Activated T-helper 2 cell treated with anti-CD3 and anti-CD28 coated beads, Interferon-gamma antibody, Interleukin-2, Interleukin-4, amounts not matched to agents 10 μg/mL and 5 μg/mL and 100 μg/mL, durations not matched to agents 14 hours and 24 hours and 36 hours (primary cell): ENCODE measurements at regions of chr17 and their contacts with region 1.

Region 1: DNA sequence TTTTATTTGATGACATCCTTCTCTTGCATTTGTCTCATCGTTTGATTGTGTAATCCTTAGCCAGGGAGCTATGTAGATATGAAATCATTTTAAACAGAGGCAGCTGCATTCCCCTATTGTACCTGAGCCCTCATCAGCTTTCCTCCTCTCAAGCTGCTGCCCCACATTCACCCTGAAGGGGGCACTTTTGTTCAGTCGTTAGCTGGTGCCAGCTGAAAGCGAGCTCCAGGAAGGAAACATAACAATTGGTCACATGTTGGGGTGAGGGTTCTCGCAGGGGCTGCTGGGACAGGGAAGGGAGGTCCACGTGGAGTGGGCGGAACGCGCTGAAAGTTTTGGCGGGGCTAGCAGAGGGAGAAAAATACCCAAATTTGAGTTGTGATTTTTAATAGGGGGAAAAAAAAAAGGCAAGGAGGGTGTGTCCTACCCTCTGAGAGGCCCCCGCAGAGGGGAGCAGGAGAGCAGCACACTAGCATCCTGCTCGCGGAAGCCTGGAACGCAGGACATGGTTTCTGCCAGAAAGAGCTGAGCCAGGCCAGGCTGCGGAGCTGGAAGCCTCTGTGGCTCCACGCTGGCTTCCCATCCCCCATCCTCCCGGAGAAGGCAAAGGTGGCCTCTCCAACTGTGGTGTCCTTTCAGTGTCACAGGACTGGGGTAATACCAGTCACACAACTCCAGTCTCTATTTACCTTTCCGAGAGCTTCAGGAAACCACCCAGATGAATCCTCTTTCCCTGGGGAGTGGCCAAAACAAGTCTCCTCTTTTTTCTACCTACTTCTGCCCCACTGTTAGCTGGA is 8.5 kb upstream of the MSL1 start:
- DNase-seq: peak; percentile 89
- H3K4me3 Mint-ChIP-seq: peak overlapping the region; percentile 81
- H3K27ac Mint-ChIP-seq: peak overlapping the region; percentile 89
- H3K4me1 Mint-ChIP-seq: peaks cover 40% of the 10 kb centered on the region
- H3K27me3 Mint-ChIP-seq: no peaks in the 10 kb centered on the region

Region 2: DNA sequence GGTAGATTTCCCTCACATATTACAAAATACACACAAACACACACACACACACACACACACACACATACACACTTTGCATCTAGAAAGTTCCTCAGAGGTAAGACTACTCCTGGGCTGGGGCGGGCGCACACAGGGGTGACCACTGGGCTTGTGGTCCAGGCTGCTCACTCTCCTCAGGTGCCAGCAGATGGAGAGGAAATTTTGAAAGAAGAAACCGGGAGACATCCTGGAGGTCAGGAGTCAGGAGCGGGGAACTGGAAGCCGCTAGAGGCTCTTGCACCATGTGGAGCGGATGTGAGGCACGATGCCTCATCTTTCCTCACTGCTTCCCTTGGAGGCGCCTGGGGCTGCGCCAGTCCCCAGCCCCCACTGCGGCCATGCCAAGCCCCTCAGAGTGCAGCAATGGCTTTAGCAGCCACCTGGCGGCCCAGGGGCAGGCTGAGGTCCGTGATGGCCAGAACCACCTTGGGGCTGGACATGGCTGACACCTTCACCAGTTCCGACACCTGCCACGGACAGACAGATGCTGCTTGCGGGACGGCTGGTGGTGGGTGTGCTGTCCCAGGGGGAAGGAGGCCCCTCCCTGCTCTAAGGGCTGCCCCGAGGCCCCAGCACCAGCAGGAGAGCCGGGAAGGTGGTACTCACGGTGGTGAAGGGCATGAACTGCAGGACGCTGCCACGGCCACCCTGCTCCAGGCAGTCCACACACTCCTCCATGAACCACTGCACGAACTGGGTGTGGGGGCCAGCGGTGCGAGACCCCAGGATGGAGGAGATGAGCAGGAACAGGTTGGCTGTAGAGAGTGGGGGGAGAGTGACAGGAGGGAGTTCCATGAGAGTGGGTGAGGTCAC is 93.9 kb before region 1 on chr17:
- intact Hi-C with region 1: loop called (anchors 5 kb)
- DNase-seq: no peak
- H3K4me3 Mint-ChIP-seq: no peak overlapping the region
- H3K27ac Mint-ChIP-seq: no peak overlapping the region
- H3K4me1 Mint-ChIP-seq: no peaks in the 10 kb centered on the region
- H3K27me3 Mint-ChIP-seq: no peaks in the 10 kb centered on the region

Region 3: DNA sequence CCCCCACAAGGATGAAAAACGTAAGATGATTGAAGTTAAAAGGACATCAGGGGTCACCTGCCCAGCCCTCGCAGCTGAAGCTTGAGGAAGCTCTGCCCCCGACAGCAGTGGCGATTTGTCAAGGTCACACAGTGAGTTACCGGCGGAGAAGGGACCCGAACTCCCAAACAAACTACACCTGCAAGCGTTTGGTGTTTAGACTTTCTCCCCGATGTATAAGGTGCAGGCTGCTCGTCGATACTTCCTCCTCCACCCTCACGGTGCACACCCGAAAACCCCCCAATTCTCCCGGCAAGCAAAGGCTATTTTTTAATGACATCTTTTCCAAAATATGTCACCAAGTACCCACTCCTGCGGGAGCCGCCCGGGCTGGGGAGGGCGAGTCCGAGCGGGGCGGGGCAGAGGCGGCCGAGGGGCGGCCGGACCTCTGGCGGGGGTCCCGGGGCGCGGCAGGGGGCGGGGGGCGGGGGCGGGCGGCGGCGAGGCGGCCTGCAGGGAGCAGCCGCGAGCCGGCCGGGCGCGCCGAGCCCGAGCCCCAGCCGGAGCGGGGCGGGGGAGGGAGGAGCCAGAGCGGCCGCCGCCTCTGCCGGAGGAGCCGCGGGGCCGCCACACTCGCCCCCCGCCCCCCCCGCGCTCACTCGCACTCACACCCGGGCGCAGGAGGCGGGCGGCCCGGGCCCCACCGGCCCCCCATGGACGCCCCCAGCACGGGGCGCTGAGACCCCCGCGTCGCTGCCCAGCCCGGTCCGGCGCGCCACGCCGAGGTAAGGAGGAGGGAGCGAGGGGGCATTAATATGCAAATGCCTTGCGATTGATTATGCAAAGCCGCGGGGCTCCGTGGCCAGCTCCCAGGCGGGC is 50.8 kb before region 1 on chr17 and contains the start of gene THRA:
- intact Hi-C with region 1: loop called (anchors 2 kb)
- DNase-seq: peak; percentile 60
- H3K4me3 Mint-ChIP-seq: peak within 1 kb of the TSS; percentile 79
- H3K27ac Mint-ChIP-seq: peak within 1 kb of the TSS; percentile 3
- H3K4me1 Mint-ChIP-seq: peaks cover 16% of the 10 kb centered on the region
- H3K27me3 Mint-ChIP-seq: peaks cover 28% of the 10 kb centered on the region
- total RNA-seq, gene THRA: 4.9 and 5.6 TPM in 2 replicates

Region 4: DNA sequence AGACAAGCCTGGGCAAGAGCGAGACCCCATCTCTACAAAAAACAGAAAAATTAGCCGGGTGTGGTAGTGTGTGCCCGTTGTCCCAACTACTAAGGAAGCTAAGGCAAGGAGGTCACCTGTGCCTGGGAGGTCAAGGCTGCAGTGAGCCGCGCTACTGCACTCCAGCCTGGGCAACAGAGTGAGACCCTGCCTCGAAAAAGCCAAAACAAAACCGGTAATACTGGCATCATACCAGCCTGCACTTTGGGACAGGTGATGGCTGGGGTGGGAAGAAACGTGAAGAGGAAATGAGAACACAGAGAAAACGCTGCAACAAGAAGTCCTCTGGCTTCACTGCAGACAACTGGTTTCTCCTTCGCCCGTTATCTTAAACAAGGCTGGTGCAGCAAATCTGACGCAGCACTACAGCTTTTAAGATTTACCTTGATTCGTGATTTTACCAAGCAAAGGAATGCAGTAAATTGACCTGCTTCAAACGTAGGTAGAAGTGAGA is 26.3 kb after region 1 on chr17:
- intact Hi-C with region 1: loop called (anchors 1 kb)
- DNase-seq: peak; percentile 16
- H3K4me3 Mint-ChIP-seq: peak overlapping the region; percentile 89
- H3K27ac Mint-ChIP-seq: peak overlapping the region; percentile 82
- H3K4me1 Mint-ChIP-seq: peaks cover 21% of the 10 kb centered on the region
- H3K27me3 Mint-ChIP-seq: no peaks in the 10 kb centered on the region

Region 5: DNA sequence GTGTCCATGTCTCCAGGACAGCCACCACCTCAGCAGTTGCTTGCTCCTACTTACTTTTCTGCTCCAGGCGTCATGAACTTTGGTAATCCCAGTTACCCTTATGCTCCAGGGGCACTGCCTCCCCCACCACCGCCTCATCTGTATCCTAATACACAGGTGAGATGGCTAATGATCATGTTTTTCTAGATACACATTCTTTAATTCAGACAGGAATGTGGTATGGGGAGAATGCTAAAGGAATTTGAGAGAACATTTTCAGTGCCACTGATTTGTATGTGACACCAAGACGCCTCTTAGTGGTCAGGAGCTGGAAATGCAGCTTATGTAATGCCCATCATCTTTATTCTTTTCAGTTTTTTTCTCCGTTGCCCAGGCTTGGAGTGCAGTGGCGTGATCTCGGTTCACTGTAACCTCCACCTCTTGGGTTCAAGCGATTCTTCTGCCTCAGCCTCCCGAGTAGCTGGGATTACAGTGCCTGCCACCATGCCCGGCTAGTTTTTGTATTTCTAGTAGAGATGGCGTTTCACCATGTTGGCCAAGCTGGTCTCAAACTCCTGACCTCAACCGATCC is 55.0 kb after region 1 on chr17:
- intact Hi-C with region 1: loop called (anchors 1 kb)
- DNase-seq: no peak
- H3K4me3 Mint-ChIP-seq: no peak overlapping the region
- H3K27ac Mint-ChIP-seq: no peak overlapping the region
- H3K4me1 Mint-ChIP-seq: peaks cover 15% of the 10 kb centered on the region
- H3K27me3 Mint-ChIP-seq: no peaks in the 10 kb centered on the region